H1 (cell line): ENCODE measurements at regions of chr20 and their contacts with region 1.

Region 1: DNA sequence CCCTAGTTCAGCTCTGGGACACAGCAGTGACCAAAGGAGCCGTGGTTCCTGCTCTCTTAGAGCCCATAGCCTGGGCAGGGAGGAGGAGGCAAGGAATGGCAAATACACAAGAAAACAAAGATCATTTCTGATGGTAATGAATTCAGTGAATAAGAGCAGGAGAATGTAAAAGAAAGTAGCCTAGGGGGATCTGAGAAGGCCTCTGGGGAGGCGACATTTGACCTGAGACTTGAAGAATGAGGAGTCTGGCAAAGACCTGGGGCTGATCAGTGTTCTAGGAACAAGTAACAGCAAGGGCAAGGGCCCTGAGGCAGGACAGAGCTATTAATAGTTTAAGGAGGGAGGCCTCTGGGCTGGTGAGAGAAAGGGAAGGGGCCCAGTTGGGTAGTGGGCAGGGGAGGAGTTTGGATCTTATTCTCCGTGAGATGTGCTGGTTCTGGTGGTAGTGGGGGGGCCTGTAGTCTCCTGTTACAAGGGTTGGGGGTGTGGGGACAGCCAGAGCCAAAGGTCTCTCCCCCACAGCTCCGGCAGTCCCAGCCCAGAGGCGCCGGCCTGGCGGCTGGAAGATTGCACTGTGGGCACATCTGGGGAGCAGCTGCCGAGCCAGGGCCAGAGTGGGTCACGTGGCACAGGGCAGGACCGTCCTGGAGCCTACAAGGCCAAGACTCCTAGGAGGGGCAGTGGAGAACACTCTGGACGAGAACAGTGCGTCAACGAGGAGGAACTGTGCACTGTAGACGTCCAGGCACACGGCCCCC is 9.3 kb upstream of the ID1 start:
- DNase-seq: peak; percentile 78 to 90
- H3K4me3 ChIP-seq: peak overlapping the region in 1 of 4 experiments; percentile 16; a peak in 1 of 8 replicates
- H3K27ac ChIP-seq: peak overlapping the region; percentile 69; the same call in 1 of the 2 replicates
- H3K4me1 ChIP-seq: peaks cover 23 to 32% (median 24%) of the 10 kb centered on the region in 4 experiments
- H3K27me3 ChIP-seq: no peaks in the 10 kb centered on the region
- CTCF ChIP-seq: no peak; a peak in 1 of 4 replicates
- EP300 ChIP-seq: peak in 1 of 2 experiments; percentile 84; a peak in 1 of 3 replicates
- POLR2A ChIP-seq: peak in 1 of 2 experiments; percentile 53; a peak in 1 of 3 replicates
- RAD21 ChIP-seq: no peak

Region 2: DNA sequence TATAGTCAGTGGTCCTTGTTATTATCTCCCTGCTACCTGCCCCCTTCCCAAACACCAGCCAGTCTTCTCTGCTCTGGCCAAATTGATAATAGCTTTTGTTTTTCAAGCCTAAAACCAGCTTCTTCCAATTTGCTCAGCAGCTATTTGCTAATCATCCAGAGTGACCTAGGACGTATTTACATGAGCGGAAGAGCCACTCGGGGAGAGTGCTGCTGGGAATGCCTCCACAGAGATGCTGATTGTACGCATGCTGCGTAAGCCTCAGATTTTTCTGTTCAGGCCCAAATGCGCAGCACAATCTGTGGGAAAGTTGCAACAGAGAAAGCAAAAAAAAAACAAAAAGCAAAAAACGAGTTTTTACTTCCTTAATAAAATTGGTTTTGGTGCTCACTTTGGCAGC is 15.1 kb before region 1 on chr20:
- CTCF ChIA-PET with region 1: interaction called, 1,559 read pairs
- POLR2A ChIA-PET with region 1: interaction called, 1,033 read pairs
- DNase-seq: no peak
- H3K4me3 ChIP-seq: peak overlapping the region in 1 of 4 experiments; percentile 6; a peak in 1 of 8 replicates
- H3K27ac ChIP-seq: peak overlapping the region; percentile 59; the same call in 1 of the 2 replicates
- H3K4me1 ChIP-seq: peaks cover 9 to 19% (median 14%) of the 10 kb centered on the region in 4 experiments
- H3K27me3 ChIP-seq: no peaks in the 10 kb centered on the region
- CTCF ChIP-seq: no peak
- EP300 ChIP-seq: no peak
- POLR2A ChIP-seq: no peak; a peak in 1 of 3 replicates
- RAD21 ChIP-seq: no peak

Region 3: DNA sequence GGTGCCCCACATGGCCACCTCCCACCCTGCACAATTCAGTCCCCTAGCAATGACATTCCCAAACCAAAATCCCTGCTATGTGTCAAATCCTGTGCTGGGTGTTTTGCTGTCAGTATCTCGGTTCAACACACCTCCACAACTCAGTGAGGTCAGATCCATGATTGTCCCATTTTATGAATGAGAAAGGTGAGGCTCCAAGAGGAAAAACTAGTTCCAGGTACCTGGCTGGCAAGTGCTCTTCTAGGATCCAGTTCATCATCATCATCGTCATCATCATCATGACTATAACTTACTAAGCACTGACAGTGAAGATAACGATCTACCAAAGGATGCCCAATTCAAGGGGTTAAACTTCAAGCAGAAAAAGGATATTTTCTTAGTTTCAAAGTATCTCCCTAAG is 24.4 kb after region 1 on chr20:
- CTCF ChIA-PET with region 1: no interaction called
- POLR2A ChIA-PET with region 1: no interaction called
- DNase-seq: no peak
- H3K4me3 ChIP-seq: no peak overlapping the region
- H3K27ac ChIP-seq: no peak overlapping the region
- H3K4me1 ChIP-seq: no peaks in the 10 kb centered on the region; a peak in 1 of 7 replicates
- H3K27me3 ChIP-seq: no peaks in the 10 kb centered on the region; a peak in 2 of 7 replicates
- CTCF ChIP-seq: no peak
- EP300 ChIP-seq: no peak
- POLR2A ChIP-seq: no peak
- RAD21 ChIP-seq: no peak